ENCODE measurements at regions of chr1 and their contacts with region 1.

Region 1: DNA sequence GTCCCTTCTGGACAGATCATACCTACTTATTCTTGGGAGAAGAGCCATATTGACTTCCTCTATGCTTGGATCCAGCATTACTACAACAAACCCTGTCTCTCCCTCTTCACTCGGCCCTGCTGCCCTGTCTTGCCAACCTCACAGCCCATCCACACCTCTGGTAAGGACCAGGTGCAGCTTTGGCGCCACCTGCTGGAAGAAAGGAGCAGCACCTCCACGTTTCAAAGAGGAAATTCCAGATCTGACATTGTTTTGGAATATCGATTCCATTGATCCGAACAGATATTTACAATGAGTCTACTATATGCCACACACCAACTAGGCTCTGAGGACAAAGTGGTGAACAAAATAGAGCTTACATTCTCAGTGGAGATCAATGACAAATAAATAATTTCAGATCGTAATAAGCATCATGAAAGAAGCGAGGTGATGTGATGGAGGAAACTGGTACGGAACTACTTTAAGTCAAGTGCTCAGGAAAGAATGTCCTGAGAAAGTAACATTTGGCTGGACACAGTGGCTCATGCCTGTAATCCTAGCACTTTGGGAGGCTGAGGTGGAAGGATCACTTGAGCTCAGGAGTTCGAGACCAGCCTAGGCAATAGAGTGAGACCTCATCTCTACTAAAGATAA is 18.7 kb downstream of the MFSD2A start:
- DNase-seq: no peak
- H3K4me3 ChIP-seq: no peak overlapping the region
- H3K27ac ChIP-seq: no peak overlapping the region
- H3K27me3 ChIP-seq: no peaks in the 10 kb centered on the region
- CTCF ChIP-seq: peak; percentile 98

Region 2: DNA sequence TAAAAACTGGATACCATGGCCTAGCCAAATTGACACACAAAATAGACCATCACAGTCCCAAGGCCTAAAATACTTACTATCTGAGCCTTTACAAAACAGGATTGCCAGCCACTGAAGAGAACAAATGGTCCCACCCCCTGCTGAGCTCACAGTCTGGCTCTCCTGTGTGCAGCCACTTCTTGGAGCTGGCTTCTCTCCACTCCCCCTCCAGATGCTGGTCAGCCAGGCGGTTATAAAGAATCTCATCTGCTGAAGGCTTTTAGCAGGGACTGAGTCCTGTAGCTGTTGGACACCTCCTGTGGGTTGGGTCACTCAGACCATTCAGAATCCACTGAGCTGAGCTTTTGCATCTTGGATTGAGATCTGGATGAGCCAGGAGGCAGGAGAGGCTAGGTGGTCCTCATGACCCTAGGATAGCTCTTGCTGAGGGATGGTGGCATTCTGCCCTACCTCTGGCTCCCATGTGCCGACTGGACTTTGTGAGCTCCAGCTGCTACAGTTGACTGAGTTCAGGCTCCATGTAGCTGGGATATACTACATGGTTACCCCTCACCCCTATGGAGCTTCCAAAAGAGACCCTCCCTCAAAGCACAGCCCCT is 218.6 kb before region 1 on chr1:
- CTCF ChIA-PET with region 1: no interaction called
- POLR2A ChIA-PET with region 1: no interaction called
- DNase-seq: no peak
- H3K4me3 ChIP-seq: no peak overlapping the region
- H3K27ac ChIP-seq: no peak overlapping the region
- H3K27me3 ChIP-seq: no peaks in the 10 kb centered on the region
- CTCF ChIP-seq: no peak

Region 3: GRCh38 chr1:39822091-39822490 is 151.5 kb before region 1 on chr1:
- CTCF ChIA-PET with region 1: interaction called, 33 read pairs
- POLR2A ChIA-PET with region 1: no interaction called
- DNase-seq: no peak
- H3K4me3 ChIP-seq: no peak overlapping the region
- H3K27ac ChIP-seq: no peak overlapping the region
- H3K27me3 ChIP-seq: peaks cover 7% of the 10 kb centered on the region
- CTCF ChIP-seq: no peak

Region 4: DNA sequence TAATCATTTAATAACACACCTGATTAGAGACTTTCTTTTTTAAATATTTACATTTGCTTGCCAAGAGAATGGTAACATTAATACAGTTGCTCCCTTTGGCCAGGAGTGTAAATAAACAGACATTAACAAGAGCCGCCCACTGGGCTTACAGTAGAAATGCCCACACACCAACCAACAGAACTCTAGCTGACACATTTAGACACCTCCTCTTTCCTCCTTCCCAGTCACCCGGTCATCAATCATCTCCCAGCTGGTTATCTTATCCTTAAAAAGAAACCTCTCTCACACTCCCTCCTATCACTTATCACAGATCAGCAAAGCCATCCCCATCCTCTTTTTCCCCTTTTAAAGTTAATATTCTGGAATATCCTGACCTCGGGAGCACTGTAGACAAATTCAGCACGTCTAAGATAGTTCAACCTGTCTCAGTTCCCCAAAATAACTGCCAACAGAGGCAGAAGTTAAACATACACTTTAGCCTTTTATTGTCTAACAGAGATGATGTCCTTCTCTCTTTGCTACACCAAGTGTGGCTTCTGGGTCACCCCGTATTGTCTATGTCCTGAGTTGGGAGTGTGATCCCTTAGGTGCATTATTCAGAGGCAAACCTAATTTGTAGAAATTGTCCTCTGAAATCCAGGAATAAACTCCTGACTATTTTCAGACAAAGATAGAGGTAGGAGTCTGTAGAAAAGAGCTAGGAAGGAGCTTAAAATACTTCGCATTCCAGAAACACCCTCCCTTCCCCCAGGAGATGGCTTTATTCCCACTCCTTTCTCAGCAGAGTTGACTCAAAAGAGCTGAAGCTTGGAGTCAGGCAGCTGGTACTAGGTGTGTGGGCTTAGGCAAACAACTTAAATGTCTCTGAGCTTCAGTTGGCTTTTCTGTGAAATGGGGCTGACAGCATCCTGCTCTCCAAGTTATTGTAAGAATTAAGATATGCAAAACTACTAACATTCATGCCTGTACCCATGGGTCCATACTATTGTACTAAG is 80.7 kb before region 1 on chr1:
- CTCF ChIA-PET with region 1: interaction called, 17 read pairs
- POLR2A ChIA-PET with region 1: no interaction called
- DNase-seq: peak; percentile 48
- H3K4me3 ChIP-seq: no peak overlapping the region
- H3K27ac ChIP-seq: peak overlapping the region; percentile 13
- H3K27me3 ChIP-seq: no peaks in the 10 kb centered on the region
- CTCF ChIP-seq: no peak

Region 5: DNA sequence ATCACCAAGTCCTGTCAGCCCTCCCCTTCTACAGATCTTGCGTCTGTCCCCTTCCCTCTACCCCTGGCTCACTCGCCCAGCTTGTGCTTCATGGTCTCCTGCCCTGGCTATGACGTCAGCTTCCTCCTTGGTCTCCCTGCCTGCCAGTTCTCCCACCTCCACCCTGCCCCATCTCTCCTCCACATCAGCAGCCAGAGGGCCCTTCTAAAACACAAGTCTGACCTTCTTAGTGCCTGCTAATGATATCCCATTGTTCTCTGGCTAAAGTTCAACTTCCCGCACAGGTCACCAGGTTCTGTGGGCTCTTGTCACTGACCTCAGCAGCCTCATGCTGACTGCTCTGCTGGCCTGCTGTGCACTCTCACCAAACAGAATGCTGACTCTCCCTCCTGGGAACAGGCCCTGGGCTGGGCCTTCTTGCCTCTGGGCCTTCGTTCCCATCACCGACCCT is 47.3 kb before region 1 on chr1:
- CTCF ChIA-PET with region 1: interaction called, 13 read pairs
- POLR2A ChIA-PET with region 1: no interaction called
- DNase-seq: no peak
- H3K4me3 ChIP-seq: no peak overlapping the region
- H3K27ac ChIP-seq: no peak overlapping the region
- H3K27me3 ChIP-seq: peaks cover 19% of the 10 kb centered on the region
- CTCF ChIP-seq: no peak

Region 6: GRCh38 chr1:39960431-39960958 is 13.1 kb before region 1 on chr1:
- CTCF ChIA-PET with region 1: interaction called, 12 read pairs
- POLR2A ChIA-PET with region 1: no interaction called
- DNase-seq: no peak
- H3K4me3 ChIP-seq: no peak overlapping the region
- H3K27ac ChIP-seq: no peak overlapping the region
- H3K27me3 ChIP-seq: no peaks in the 10 kb centered on the region
- CTCF ChIP-seq: no peak

Region 7: GRCh38 chr1:40014812-40015594 is 41.4 kb after region 1 on chr1:
- CTCF ChIA-PET with region 1: interaction called, 21 read pairs
- POLR2A ChIA-PET with region 1: no interaction called
- DNase-seq: peak; percentile 76
- H3K4me3 ChIP-seq: 0 out of 2 replicates have a peak overlapping the region, but pooled peaks have one; percentile 10
- H3K27ac ChIP-seq: peak overlapping the region; percentile 86
- H3K27me3 ChIP-seq: no peaks in the 10 kb centered on the region
- CTCF ChIP-seq: no peak

Region 8: GRCh38 chr1:40224040-40224439 is 250.4 kb after region 1 on chr1:
- CTCF ChIA-PET with region 1: no interaction called
- POLR2A ChIA-PET with region 1: no interaction called
- DNase-seq: no peak
- H3K4me3 ChIP-seq: no peak overlapping the region
- H3K27ac ChIP-seq: no peak overlapping the region
- H3K27me3 ChIP-seq: no peaks in the 10 kb centered on the region
- CTCF ChIP-seq: no peak